ENCODE measurements at regions of chr17 and their contacts with region 1.

Region 1: GRCh38 chr17:42132941-42133340 is 10.3 kb downstream of the HSPB9 start:
- DNase-seq: peak; percentile 72
- H3K4me3 Mint-ChIP-seq: peak overlapping the region; percentile 29
- H3K27ac Mint-ChIP-seq: peak overlapping the region; percentile 43
- H3K4me1 Mint-ChIP-seq: peaks cover 57% of the 10 kb centered on the region
- H3K27me3 Mint-ChIP-seq: no peaks in the 10 kb centered on the region
- CTCF ChIP-seq: no peak

Region 2: DNA sequence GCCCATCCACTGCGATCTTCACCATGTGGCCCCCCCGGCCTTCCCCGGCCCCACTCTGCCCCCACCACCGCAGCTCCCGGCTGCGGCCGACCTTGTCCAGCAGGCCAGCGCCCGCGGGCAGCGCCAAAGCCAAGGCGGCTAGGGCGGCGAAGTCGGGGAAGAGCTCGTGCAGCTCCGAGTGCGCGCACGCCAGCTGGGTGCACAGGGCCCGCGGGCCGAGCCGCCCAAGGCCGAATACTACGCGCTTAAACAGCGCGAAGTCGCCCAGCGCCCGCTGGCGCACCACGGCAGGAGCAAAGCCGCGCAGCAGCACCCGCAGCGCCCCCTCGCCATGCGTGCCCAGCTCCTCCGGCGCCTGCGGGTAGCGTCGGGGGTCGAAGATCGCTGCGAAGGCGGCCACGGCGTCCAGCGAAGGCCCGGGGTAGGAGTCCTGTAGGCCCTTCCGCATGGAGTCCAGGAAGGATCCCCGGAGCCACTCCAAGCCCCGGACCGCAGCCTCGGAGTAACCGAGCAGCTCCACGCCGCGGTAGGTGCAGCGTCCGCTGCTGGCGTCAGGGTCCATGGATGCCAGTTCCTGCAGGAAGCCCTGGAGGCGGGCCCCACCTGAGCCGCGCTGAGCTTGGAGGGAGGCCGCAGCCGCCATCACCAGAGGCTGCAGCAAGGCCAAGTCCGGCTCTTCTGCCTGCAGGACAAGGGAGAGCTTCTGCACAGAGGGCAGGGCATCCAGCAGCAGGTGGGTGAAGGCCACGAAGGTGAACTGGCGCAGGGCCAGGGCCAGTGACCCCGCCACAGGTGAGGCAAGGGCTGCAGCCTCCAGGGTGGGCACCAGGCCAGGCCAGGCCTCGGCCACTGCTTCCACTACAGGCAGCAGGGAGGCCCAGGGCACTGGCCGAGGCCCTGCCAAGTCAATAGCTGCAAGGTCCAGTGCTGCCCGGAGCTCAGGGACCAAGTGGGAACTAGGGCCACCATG is 92.9 kb before region 1 on chr17:
- CTCF ChIA-PET with region 1: no interaction called
- intact Hi-C with region 1: no loop called
- DNase-seq: no peak
- H3K4me3 Mint-ChIP-seq: no peak overlapping the region
- H3K27ac Mint-ChIP-seq: no peak overlapping the region
- H3K4me1 Mint-ChIP-seq: no peaks in the 10 kb centered on the region
- H3K27me3 Mint-ChIP-seq: no peaks in the 10 kb centered on the region
- CTCF ChIP-seq: peak; percentile 4

Region 3: GRCh38 chr17:42120770-42121769 is 11.9 kb before region 1 on chr17 and contains the start of gene KAT2A:
- CTCF ChIA-PET with region 1: interaction called, 11 read pairs
- intact Hi-C with region 1: no loop called
- DNase-seq: peak; percentile 91
- H3K4me3 Mint-ChIP-seq: peak within 1 kb of the TSS; percentile 59
- H3K27ac Mint-ChIP-seq: peak within 1 kb of the TSS; percentile 58
- H3K4me1 Mint-ChIP-seq: peaks cover 9% of the 10 kb centered on the region
- H3K27me3 Mint-ChIP-seq: no peaks in the 10 kb centered on the region
- CTCF ChIP-seq: no peak
- total RNA-seq, gene KAT2A: 94.7 and 100.0 TPM in 2 replicates

Region 4: DNA sequence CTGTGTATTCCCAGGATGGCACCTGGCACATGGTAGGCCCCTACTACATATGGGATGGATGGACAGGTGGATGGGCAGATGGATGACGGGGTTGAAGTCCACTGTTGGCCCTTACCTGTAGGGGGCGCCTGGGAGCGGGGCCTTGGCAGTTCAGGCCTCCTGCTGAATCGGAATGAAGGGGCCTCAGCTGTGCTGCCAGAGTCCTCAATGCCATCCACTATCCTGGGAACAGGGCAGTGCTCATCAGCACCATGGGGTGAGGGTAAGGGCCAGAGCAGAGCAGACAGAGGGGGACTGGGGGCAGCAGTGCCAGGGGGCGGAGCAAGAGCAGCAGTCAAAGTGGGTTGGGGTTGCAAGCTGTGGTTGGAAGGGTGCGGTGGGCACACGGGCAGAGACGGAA is 30.2 kb after region 1 on chr17:
- CTCF ChIA-PET with region 1: no interaction called
- intact Hi-C with region 1: no loop called
- DNase-seq: peak; percentile 53
- H3K4me3 Mint-ChIP-seq: no peak overlapping the region
- H3K27ac Mint-ChIP-seq: no peak overlapping the region
- H3K4me1 Mint-ChIP-seq: no peaks in the 10 kb centered on the region
- H3K27me3 Mint-ChIP-seq: peaks cover 30% of the 10 kb centered on the region
- CTCF ChIP-seq: peak; percentile 69

Region 5: GRCh38 chr17:42276359-42276608 is 143.3 kb after region 1 on chr17 and contains the start of gene STAT5B:
- CTCF ChIA-PET with region 1: no interaction called
- intact Hi-C with region 1: loop called (anchors 10 kb)
- DNase-seq: peak; percentile 90
- H3K4me3 Mint-ChIP-seq: peak within 1 kb of the TSS; percentile 76
- H3K27ac Mint-ChIP-seq: peak within 1 kb of the TSS; percentile 93
- H3K4me1 Mint-ChIP-seq: peaks cover 39% of the 10 kb centered on the region
- H3K27me3 Mint-ChIP-seq: no peaks in the 10 kb centered on the region
- CTCF ChIP-seq: no peak
- total RNA-seq, gene STAT5B: 45.4 and 45.8 TPM in 2 replicates

Measured in Calu3 (cell line).